Adrenal gland (tissue), 19 donors: ENCODE measurements at regions of chr12 and their contacts with region 1.

Region 1: GRCh38 chr12:111444925-111445725 is 39.4 kb downstream of the SH2B3 start:
- DNase-seq: peak; percentile 48 to 85 (median 67)
- H3K4me3 ChIP-seq: no peak overlapping the region
- H3K27ac ChIP-seq: peak overlapping the region in 3 of 5 donors; percentile 29 to 83 (median 69)
- H3K4me1 ChIP-seq: peaks cover 15 to 66% of the 10 kb centered on the region in 2 donors
- H3K27me3 ChIP-seq: no peaks in the 10 kb centered on the region
- CTCF ChIP-seq: peak in 2 of 6 experiments; percentile 12 to 16
- POLR2A ChIP-seq: no peak

Region 2: DNA sequence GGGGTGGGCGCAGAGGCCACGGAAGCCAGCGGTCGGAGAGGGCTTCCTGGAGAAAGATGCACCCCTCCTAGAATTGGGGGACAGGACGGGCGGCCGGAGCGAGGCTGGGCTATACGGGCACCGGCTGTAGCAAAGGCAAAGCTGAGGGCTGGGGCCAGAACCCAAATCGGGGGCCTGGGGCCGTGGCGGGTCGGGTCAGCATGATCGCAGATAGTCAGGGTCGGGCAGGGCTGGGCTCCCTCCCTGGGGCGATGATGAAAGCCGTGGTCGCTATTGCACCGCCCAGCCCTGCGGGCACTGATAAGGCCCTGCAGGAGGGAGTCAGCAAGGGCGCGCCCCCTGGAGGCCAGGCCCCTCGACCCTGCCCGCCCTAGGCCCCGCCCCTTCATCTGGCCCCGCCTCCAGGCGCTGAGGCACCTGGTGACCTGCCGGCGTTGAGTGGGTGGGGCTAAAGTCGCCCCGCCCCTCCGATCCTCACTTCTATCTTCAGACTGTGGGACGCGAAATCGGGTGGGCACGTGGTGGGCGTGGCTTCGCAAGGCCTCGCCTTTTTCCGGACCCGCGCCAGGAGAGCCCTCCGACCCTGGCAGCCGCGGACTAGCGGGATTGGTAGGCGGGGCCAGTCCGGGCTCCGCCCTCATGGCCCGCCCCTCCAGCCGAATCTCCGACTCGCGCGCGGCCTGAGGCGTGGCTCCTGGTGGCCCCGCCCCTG is 39.8 kb before region 1 on chr12:
- intact Hi-C with region 1: loop called (anchors 5 kb)
- DNase-seq: peak; percentile 94 to 99 (median 96)
- H3K4me3 ChIP-seq: peak overlapping the region in 2 of 4 donors; percentile 70 to 87
- H3K27ac ChIP-seq: peak overlapping the region in 4 of 5 donors; percentile 36 to 97 (median 62)
- H3K4me1 ChIP-seq: peaks cover 0 to 50% of the 10 kb centered on the region in 2 donors
- H3K27me3 ChIP-seq: no peaks in the 10 kb centered on the region
- CTCF ChIP-seq: peak; percentile 39 to 63 (median 53)
- POLR2A ChIP-seq: no peak